GM12878 (cell line): ENCODE measurements at regions of chr17 and their contacts with region 1.

Region 1: DNA sequence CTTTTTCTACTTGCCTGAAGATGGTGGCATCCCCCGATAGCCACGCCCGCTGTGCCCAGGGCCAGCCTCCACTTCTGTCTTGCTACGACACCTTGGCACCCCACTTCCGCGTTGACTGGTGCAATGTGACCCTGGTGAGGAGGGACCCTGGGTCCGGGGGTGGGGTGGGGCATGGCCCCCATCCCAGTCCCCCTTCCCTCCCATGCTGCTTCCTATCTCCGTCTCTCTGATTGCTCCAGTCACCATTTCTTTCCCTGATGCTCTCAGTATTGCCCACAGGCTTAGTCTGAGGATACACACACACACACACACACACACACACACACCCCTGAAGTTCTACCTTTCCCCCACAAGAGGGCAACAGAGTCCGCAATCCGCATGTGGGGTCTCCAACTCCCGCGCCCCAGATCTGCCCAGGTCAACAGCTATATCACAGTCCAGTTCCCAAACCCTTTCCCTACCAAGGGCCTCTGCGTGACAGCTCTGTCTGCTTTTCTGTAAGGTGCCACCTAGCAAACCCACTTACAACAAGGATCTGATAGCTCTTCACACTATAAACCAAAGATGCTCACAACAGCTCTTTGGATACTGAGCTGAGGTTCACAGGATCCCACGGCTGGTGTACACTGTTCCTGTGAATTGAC is 3.4 kb downstream of the SGCA start:
- DNase-seq: peak; percentile 44
- ATAC-seq: peak; percentile 73
- H3K4me3 ChIP-seq: no peak overlapping the region
- H3K27ac ChIP-seq: no peak overlapping the region
- H3K4me1 ChIP-seq: peaks cover 18% of the 10 kb centered on the region
- H3K27me3 ChIP-seq: no peaks in the 10 kb centered on the region
- CTCF ChIP-seq: peak; percentile 88 to 95 (median 90)
- EP300 ChIP-seq: no peak
- POLR2A ChIP-seq: no peak
- RAD21 ChIP-seq: peak; percentile 96

Region 2: DNA sequence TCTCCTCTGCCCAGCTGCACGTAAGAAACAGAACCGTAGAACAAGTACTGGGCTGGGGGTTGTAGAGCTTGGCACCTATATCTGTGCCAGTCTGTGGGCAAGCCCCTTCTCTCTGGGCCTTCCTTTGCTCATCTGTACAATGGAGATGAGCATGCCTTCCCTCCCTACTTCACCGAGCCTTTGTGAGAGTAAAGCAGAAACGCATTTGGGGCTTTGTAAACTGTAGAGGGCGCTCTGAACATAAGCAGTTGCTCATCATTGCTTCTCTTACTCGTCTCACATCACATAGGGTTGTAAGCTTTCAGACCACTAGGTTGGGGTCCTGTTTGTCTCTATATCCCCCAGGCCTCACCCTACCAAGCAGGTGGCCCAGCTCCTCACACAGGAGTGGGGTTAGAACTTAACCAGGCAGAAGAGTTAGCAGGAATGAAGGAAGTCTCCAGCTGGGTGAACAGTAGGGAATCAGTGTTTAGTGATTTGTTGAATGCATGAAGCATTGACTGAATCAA is 54.3 kb before region 1 on chr17:
- CTCF ChIA-PET with region 1: interaction called, 23 read pairs
- POLR2A ChIA-PET with region 1: interaction called, 3 read pairs
- RAD21 ChIA-PET with region 1: interaction called, 3 read pairs
- SMC1A ChIA-PET with region 1: interaction called, 8 read pairs
- in situ Hi-C with region 1: no loop called
- intact Hi-C with region 1: no loop called
- DNase-seq: no peak
- ATAC-seq: peak; percentile 74
- H3K4me3 ChIP-seq: no peak overlapping the region
- H3K27ac ChIP-seq: no peak overlapping the region
- H3K4me1 ChIP-seq: no peaks in the 10 kb centered on the region
- H3K27me3 ChIP-seq: peaks cover 6% of the 10 kb centered on the region in 2 experiments; a peak in 3 of 4 replicates
- CTCF ChIP-seq: peak; percentile 69 to 77 (median 72)
- EP300 ChIP-seq: no peak
- POLR2A ChIP-seq: no peak
- RAD21 ChIP-seq: peak; percentile 64

Region 3: DNA sequence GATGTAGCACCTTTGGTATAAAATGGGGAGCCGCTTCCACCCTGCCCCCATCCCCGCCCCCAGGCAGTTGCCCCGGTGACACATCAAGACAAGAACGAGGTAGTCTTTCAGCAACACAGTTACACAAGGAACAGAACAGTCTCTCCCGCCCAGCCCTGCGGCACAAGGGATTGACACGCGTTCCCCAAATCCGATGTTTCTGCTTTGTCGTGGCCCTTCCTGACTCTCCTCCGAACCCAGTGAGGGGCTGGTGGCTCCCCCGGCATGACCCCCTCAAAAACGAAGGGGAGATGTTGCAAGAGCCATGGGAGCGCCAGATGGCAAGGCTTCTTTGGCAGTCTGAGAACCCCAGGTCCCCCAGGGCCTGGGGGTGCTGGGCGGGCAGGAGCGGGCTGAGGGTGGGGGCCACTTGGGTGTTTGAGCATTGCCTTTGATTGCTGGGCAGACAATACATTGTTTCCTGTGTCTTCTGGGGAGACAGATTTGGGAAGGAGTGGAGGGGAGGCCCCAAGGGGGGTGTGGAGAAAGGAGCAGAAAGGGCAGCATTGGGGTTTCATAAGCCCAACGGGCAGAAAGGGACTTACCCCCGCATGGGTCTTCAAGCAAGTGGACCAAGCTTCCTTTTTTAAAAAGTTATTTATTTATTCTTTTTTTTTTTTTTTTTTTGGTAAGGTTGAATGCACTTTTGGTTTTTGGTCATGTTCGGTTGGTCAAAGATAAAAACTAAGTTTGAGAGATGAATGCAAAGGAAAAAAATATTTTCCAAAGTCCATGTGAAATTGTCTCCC is 15.6 kb after region 1 on chr17:
- CTCF ChIA-PET with region 1: interaction called, 514 read pairs
- POLR2A ChIA-PET with region 1: interaction called, 5 read pairs
- RAD21 ChIA-PET with region 1: interaction called, 9 read pairs
- SMC1A ChIA-PET with region 1: interaction called, 10 read pairs
- in situ Hi-C with region 1: no loop called
- intact Hi-C with region 1: no loop called
- DNase-seq: no peak
- ATAC-seq: peak; percentile 36
- H3K4me3 ChIP-seq: no peak overlapping the region
- H3K27ac ChIP-seq: no peak overlapping the region
- H3K4me1 ChIP-seq: peaks cover 23% of the 10 kb centered on the region
- H3K27me3 ChIP-seq: no peaks in the 10 kb centered on the region
- CTCF ChIP-seq: no peak
- EP300 ChIP-seq: no peak
- POLR2A ChIP-seq: no peak
- RAD21 ChIP-seq: no peak

Region 4: DNA sequence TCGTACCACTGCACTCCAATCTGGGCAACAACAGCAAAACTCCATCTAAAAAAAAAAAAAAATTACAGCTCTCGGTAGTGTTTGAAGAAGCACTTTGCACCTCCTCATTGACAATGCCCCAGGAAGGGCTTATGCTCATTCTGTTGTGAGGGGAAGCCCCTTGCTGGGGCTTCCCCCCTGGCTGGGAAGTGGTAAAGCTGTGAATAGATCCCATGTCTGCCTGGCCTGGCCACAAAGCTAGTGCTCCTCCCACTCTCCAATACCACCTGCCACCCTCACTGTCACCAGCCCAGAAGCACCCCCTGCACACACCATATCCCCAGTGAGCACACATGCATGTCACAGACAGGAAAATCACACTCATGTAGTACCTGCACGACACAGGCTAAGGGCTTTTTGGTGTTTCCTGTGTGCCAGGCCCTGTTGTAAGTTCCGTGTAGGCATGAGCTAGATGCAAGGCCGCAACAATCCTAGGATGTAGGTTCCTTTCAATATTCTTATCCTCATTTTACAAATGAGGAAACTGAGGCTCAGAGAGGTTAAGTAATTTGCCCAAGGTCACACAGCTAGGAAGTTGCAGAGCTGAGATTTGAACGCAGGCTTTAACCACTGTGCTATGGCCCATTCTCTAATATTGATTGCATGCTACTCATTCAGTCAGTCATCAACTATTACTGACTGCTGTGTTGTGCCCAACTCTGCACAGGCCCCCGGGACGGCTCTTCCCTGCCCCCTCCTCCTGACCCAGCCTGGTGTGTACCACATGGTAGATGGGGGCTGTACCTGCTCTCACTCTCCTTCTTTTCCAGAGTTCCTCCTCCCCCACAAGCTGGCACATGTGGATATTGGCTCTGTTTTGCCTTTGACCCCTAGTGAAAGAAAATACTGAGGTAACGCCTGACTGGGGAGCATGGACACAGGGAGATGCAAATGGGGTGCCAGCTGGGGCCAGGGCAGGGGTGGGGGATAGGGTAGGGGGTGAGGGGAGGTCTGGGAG is 44.1 kb after region 1 on chr17:
- CTCF ChIA-PET with region 1: interaction called, 31 read pairs
- POLR2A ChIA-PET with region 1: interaction called, 7 read pairs
- RAD21 ChIA-PET with region 1: interaction called, 5 read pairs
- SMC1A ChIA-PET with region 1: interaction called, 15 read pairs
- in situ Hi-C with region 1: no loop called
- intact Hi-C with region 1: no loop called
- DNase-seq: peak; percentile 43
- ATAC-seq: peak; percentile 98
- H3K4me3 ChIP-seq: no peak overlapping the region
- H3K27ac ChIP-seq: no peak overlapping the region
- H3K4me1 ChIP-seq: peaks cover 12% of the 10 kb centered on the region
- H3K27me3 ChIP-seq: 0 out of 4 replicates have a peak, but pooled peaks cover 0 to 3% of the 10 kb centered on the region in 2 experiments
- CTCF ChIP-seq: peak in 2 of 3 experiments; percentile 14 to 20; a peak in 1 of 6 replicates
- EP300 ChIP-seq: peak in 1 of 2 experiments; percentile 53; a peak in 1 of 4 replicates
- POLR2A ChIP-seq: no peak
- RAD21 ChIP-seq: no peak

Region 5: GRCh38 chr17:50289991-50290702 is 120.9 kb after region 1 on chr17:
- CTCF ChIA-PET with region 1: interaction called, 108 read pairs
- POLR2A ChIA-PET with region 1: no interaction called
- RAD21 ChIA-PET with region 1: interaction called, 38 read pairs
- SMC1A ChIA-PET with region 1: interaction called, 9 read pairs
- in situ Hi-C with region 1: no loop called
- intact Hi-C with region 1: no loop called
- DNase-seq: no peak
- ATAC-seq: peak; percentile 89
- H3K4me3 ChIP-seq: no peak overlapping the region
- H3K27ac ChIP-seq: peak overlapping the region; percentile 27; the same call in 1 of the 2 replicates
- H3K4me1 ChIP-seq: peaks cover 14% of the 10 kb centered on the region
- H3K27me3 ChIP-seq: no peaks in the 10 kb centered on the region
- CTCF ChIP-seq: no peak
- EP300 ChIP-seq: no peak
- POLR2A ChIP-seq: no peak
- RAD21 ChIP-seq: no peak

Region 6: GRCh38 chr17:50331085-50331791 is 162.0 kb after region 1 on chr17:
- CTCF ChIA-PET with region 1: interaction called, 11 read pairs
- POLR2A ChIA-PET with region 1: no interaction called
- RAD21 ChIA-PET with region 1: interaction called, 4 read pairs
- SMC1A ChIA-PET with region 1: interaction called, 3 read pairs
- in situ Hi-C with region 1: no loop called
- intact Hi-C with region 1: no loop called
- DNase-seq: no peak
- ATAC-seq: peak; percentile 65
- H3K4me3 ChIP-seq: no peak overlapping the region
- H3K27ac ChIP-seq: no peak overlapping the region
- H3K4me1 ChIP-seq: peaks cover 3% of the 10 kb centered on the region
- H3K27me3 ChIP-seq: no peaks in the 10 kb centered on the region
- CTCF ChIP-seq: no peak
- EP300 ChIP-seq: no peak
- POLR2A ChIP-seq: no peak
- RAD21 ChIP-seq: no peak